CD4-positive, alpha-beta memory T cell (primary cell): ENCODE measurements at regions of chr13 and their contacts with region 1.

Region 1: DNA sequence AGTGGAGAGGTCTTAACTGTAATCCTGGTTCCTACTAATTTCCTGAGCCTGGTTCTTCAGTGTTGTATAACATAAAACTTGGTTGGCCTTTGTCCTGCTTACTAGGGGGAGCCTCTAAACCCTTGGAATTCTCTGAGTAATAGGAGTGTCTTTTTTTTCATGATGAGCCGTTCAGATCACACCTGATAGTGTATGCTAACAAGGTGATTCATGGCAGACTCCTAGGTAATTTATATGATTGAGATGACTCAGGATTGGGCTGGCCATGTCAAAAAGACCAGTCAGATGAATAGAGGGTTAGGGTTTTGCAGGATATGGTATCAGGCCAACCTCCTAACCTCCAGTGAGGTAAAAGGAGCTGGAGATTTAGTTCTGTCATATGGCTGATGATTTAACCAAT is 135.8 kb upstream of the KLF12 start:
- DNase-seq: no peak
- H3K4me3 ChIP-seq: no peak overlapping the region
- H3K4me3 Mint-ChIP-seq: no peak overlapping the region
- H3K27ac ChIP-seq: no peak overlapping the region
- H3K27ac Mint-ChIP-seq: peak overlapping the region in 2 of 7 donors; percentile 32 to 53
- H3K4me1 ChIP-seq: peaks cover 25% of the 10 kb centered on the region
- H3K4me1 Mint-ChIP-seq: peaks cover 18 to 39% (median 24%) of the 10 kb centered on the region in 4 donors
- H3K27me3 ChIP-seq: no peaks in the 10 kb centered on the region
- H3K27me3 Mint-ChIP-seq: no peaks in the 10 kb centered on the region

Region 2: GRCh38 chr13:74251778-74252519 is 18.1 kb before region 1 on chr13:
- CTCF ChIA-PET with region 1: interaction called, 7 read pairs
- POLR2A ChIA-PET with region 1: interaction called, 4 read pairs
- intact Hi-C with region 1: loop called (anchors 2 kb)
- DNase-seq: no peak
- H3K4me3 ChIP-seq: no peak overlapping the region
- H3K4me3 Mint-ChIP-seq: peak overlapping the region in 7 of 8 donors; percentile 15 to 89 (median 62)
- H3K27ac ChIP-seq: no peak overlapping the region
- H3K27ac Mint-ChIP-seq: peak overlapping the region; percentile 31 to 87 (median 74)
- H3K4me1 ChIP-seq: peaks cover 96% of the 10 kb centered on the region
- H3K4me1 Mint-ChIP-seq: peaks cover 69 to 95% (median 82%) of the 10 kb centered on the region in 4 donors
- H3K27me3 ChIP-seq: no peaks in the 10 kb centered on the region
- H3K27me3 Mint-ChIP-seq: no peaks in the 10 kb centered on the region